H1 (cell line): ENCODE measurements at regions of chr9 and their contacts with region 1.

Region 1: GRCh38 chr9:117160254-117160653 is 254.6 kb downstream of the ASTN2 start:
- DNase-seq: no peak
- H3K4me3 ChIP-seq: no peak overlapping the region
- H3K27ac ChIP-seq: no peak overlapping the region
- H3K4me1 ChIP-seq: no peaks in the 10 kb centered on the region
- H3K27me3 ChIP-seq: no peaks in the 10 kb centered on the region
- CTCF ChIP-seq: peak in 2 of 3 experiments; percentile 39 to 60; a peak in 2 of 4 replicates
- EP300 ChIP-seq: no peak
- POLR2A ChIP-seq: no peak
- RAD21 ChIP-seq: peak; percentile 64 to 70

Region 2: GRCh38 chr9:117178596-117179375 is 18.5 kb after region 1 on chr9:
- CTCF ChIA-PET with region 1: interaction called, 15 read pairs
- POLR2A ChIA-PET with region 1: no interaction called
- DNase-seq: no peak
- H3K4me3 ChIP-seq: no peak overlapping the region
- H3K27ac ChIP-seq: no peak overlapping the region
- H3K4me1 ChIP-seq: peaks cover 0 to 3% (median 0%) of the 10 kb centered on the region in 4 experiments; a peak in 2 of 7 replicates
- H3K27me3 ChIP-seq: no peaks in the 10 kb centered on the region
- CTCF ChIP-seq: no peak
- EP300 ChIP-seq: no peak
- POLR2A ChIP-seq: no peak
- RAD21 ChIP-seq: no peak

Region 3: DNA sequence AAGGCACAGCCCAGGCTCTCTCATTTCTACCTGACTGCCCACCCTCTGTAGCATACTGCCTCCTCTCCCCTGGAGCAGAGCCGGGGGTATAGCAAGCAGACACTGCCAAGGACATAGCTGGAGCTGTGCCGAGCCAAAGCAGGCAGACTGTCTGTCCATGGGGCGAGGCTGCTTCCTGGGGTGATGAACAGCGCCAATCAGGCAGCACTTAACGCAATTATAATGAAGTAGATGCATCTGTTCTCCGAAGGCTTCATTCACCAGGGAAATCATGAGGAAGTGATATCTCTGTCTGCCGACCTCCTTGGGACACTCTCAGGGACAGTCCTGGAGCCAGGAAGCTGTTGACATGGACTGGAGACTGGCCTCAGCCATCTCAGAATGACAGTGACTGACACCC is 23.9 kb after region 1 on chr9:
- CTCF ChIA-PET with region 1: interaction called, 15 read pairs
- POLR2A ChIA-PET with region 1: no interaction called
- DNase-seq: no peak
- H3K4me3 ChIP-seq: no peak overlapping the region
- H3K27ac ChIP-seq: no peak overlapping the region
- H3K4me1 ChIP-seq: peaks cover 0 to 3% (median 0%) of the 10 kb centered on the region in 4 experiments; a peak in 2 of 7 replicates
- H3K27me3 ChIP-seq: no peaks in the 10 kb centered on the region
- CTCF ChIP-seq: no peak
- EP300 ChIP-seq: no peak
- POLR2A ChIP-seq: no peak
- RAD21 ChIP-seq: no peak

Region 4: DNA sequence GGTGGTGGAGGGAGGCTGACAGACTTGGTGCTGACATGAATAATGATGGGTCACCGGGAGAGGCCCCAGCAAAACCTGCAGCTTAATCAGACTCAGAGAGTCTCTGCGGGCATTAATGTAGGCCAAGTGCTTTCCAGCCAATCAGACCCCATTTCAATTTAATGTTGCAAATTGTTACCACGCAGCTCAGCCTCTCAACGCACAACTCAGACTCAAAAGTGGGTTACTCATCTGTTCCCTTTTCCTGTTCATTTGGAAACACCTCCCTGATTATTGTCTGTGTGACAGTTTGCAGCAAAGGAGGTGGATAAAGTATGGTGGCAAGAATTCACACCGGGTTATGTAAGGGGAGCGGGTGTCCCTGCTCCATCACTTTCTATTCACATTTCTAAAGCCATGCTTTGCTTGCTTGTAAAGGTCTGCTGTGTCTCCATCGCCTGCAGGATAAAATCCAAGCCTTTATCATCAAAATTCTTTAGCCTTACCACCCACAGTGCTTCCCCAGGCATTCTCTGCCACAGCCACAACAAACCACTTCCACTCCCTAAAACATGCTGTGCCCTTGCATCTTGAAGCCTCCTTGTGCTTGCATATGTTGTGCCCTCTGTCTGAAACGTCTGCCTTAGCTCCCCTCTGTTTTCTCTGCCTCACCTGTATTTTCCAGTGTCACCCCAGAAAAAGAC is 98.1 kb after region 1 on chr9:
- CTCF ChIA-PET with region 1: no interaction called
- POLR2A ChIA-PET with region 1: no interaction called
- DNase-seq: no peak
- H3K4me3 ChIP-seq: no peak overlapping the region
- H3K27ac ChIP-seq: no peak overlapping the region
- H3K4me1 ChIP-seq: peaks cover 2 to 6% (median 3%) of the 10 kb centered on the region in 4 experiments; a peak in 4 of 7 replicates
- H3K27me3 ChIP-seq: no peaks in the 10 kb centered on the region
- CTCF ChIP-seq: no peak
- EP300 ChIP-seq: no peak
- POLR2A ChIP-seq: no peak
- RAD21 ChIP-seq: no peak